GM23248 (cell line): ENCODE measurements at regions of chr4 and their contacts with region 1.

Region 1: GRCh38 chr4:159206427-159206871 is 103.6 kb downstream of the RAPGEF2 start:
- DNase-seq: no peak
- H3K4me3 ChIP-seq: no peak overlapping the region
- H3K27ac ChIP-seq: no peak overlapping the region
- H3K4me1 ChIP-seq: peaks cover 8% of the 10 kb centered on the region; the same call in 1 of the 2 replicates
- H3K27me3 ChIP-seq: no peaks in the 10 kb centered on the region

Region 2: DNA sequence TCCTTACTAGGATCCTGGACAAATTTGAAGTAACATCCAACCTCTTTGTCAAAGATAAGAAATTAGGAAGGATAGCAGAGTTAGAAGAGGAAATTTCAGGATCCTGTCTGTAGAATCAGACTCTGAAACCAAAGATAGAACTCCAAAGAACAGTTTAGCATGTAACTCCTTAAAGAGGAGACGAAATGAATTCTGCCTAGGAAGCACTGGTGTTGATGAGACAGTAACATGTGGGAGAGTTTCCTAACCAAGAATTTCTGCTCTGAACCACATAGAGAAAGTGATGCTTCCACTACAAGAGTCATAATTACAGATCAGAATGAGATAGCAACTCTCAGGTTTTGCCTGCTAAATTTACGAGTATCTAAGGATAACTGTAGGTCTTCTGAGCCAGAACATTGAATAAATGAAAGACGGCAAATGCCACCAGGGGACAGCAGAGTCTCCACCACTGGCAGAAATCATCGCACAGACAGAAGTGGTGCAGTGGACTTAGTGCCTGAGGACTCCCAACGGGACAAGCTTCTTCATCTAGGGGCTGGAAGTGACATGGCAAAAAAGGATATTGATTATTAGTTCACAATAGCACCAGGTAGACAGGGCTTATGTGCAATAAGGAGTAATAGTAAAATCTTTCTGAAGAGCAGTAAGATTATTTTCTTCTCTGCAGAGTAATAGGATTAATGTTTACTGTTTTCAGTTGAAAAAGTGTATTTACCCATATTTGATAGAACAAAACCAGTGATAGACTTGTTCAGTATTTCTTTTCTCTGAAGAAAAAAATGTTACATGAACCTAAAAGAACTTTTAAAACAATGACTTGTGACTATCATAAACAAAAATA is 476.5 kb before region 1 on chr4:
- in situ Hi-C with region 1: loop called (anchors 10 kb)
- DNase-seq: peak; percentile 82
- H3K4me3 ChIP-seq: no peak overlapping the region
- H3K27ac ChIP-seq: no peak overlapping the region
- H3K4me1 ChIP-seq: no peaks in the 10 kb centered on the region
- H3K27me3 ChIP-seq: peaks cover 9% of the 10 kb centered on the region; the same call in 1 of the 2 replicates

Region 3: DNA sequence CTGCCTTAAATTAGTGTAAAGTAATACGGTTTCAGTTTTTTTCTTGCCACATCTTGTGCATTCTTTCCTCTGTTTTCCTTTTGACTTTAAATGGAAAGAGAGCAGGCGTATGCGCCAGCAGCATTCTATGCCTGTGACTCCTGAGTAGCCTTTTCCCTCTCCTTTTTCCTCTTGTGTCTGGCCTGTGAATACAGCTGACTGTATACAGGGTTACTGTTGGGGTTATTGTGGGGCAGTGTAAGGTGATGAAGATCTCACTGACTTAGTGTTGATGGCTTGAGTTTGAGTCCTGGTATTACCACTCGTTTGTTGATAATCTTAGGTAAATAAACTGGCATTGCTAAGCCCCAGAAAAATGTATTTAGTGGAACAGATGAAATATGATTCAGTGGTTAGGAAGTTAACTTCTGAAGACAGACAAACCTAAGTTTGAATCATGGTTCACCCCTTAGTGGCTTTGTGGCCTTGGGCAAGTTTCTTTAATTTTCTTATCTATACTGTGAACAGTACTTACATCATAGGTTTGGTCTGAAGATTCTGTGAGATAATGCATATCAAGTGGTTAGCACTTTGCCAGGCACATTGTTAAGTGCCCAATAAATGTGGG is 332.6 kb before region 1 on chr4:
- in situ Hi-C with region 1: loop called (anchors 10 kb)
- DNase-seq: peak; percentile 87
- H3K4me3 ChIP-seq: no peak overlapping the region
- H3K27ac ChIP-seq: peak overlapping the region; percentile 5; the same call in 1 of the 2 replicates
- H3K4me1 ChIP-seq: peaks cover 8% of the 10 kb centered on the region
- H3K27me3 ChIP-seq: peaks cover 9% of the 10 kb centered on the region

Region 4: DNA sequence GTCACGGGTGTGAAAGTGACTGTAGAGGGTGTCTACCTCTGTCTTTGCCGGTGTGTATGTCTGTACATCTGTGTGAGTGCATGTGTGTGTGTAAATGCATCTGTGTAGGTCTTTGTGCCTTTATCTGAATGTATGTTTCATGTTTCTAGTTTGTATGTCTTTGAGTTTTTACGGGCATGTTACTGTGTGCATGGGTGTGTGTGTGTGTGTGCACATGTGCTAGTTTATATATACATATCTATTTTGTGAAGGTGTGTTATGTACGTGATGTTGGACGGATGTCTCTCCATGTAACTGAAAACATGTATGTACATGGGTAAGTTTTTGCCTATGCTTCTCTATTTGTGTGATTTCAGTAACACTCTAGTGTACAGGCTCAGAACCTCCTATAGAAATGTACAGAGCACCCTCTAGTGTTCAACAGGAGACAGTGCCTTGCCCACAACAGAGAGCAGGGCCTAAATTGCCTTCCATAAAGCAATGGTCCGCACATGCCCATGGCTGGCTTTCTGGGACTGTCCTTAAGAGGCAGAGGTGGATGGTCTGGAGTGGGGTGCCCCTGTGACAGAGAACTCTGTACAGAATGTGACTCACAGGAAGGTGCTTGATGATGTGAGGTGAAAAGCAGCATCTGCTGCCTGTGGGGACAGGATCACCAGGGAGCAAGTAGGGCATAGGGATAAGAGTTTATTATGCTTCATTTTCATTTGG is 240.0 kb after region 1 on chr4:
- in situ Hi-C with region 1: loop called (anchors 10 kb)
- DNase-seq: peak; percentile 86
- H3K4me3 ChIP-seq: no peak overlapping the region
- H3K27ac ChIP-seq: no peak overlapping the region
- H3K4me1 ChIP-seq: 0 out of 2 replicates have a peak, but pooled peaks cover 3% of the 10 kb centered on the region
- H3K27me3 ChIP-seq: no peaks in the 10 kb centered on the region

Region 5: DNA sequence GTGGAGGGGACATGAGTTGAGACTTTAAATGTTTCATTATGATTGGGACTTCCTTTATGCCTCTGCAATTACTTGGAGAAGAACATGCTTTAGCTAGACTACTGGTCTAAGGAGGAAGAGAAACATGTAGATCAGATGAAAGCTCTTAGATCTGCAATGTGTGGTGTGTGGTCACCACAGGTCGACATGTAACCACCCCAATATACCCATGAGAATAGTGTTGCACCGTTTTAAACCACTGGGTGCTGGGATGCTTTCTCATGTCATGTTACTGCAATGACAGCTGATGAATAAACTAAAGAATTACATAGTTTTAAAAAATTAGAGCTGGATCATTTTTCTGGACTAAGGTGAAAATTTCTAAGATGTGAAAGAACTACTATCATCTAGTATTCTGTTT is 936.1 kb after region 1 on chr4:
- in situ Hi-C with region 1: no loop called
- DNase-seq: no peak
- H3K4me3 ChIP-seq: no peak overlapping the region
- H3K27ac ChIP-seq: no peak overlapping the region
- H3K4me1 ChIP-seq: no peaks in the 10 kb centered on the region
- H3K27me3 ChIP-seq: no peaks in the 10 kb centered on the region